K562 (cell line): ENCODE measurements at regions of chr18 and their contacts with region 1.

Region 1: DNA sequence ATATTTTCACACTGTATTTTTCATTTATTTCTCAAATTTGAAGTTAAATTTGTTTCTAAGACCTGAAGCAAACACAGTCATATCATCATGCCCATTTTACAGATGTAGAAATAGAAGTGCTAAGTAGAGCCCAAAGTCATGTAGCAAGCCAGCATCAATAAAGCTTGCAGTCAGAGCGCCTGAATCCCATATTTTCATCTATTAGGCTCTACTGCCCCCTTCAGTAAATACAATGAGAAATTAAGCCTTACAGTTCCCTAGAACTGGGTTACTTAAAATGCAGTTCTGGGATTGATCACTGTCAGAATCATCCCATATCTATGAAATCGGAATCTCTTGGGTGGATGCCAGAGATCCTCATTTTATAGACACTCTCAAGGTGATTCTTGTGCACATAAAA is 419.9 kb downstream of the TGIF1 start:
- DNase-seq: peak in 3 of 4 experiments; percentile 14 to 61 (median 49)
- ATAC-seq: peak; percentile 93
- H3K4me3 ChIP-seq: no peak overlapping the region
- H3K27ac ChIP-seq: no peak overlapping the region
- H3K4me1 ChIP-seq: no peaks in the 10 kb centered on the region
- H3K27me3 ChIP-seq: no peaks in the 10 kb centered on the region
- CTCF ChIP-seq: peak; percentile 32 to 76 (median 57); a peak in 5 of 6 replicates
- EP300 ChIP-seq: no peak
- POLR2A ChIP-seq: no peak
- RAD21 ChIP-seq: peak; percentile 79 to 89

Region 2: DNA sequence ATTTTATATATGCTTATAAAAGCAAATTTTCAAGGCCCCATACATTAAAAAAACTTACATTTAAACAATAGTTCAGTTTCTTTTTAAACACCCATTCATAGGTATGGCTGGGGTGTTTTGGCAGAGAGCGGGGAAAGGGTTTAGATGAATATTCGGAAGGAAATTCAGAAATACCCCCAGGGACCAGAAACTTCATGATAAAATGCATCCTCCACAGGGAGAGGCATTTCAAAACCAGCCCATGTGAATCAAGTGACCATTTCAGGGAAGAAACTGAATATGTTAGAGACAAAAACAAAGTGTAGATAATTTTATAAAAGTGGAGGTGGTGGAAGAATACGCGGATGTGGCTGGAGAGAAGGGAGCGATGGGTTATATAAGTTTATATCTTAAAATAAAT is 92.7 kb before region 1 on chr18:
- CTCF ChIA-PET with region 1: no interaction called
- POLR2A ChIA-PET with region 1: no interaction called
- in situ Hi-C with region 1: no loop called
- intact Hi-C with region 1: no loop called
- DNase-seq: no peak
- ATAC-seq: no peak
- H3K4me3 ChIP-seq: no peak overlapping the region
- H3K27ac ChIP-seq: no peak overlapping the region
- H3K4me1 ChIP-seq: no peaks in the 10 kb centered on the region
- H3K27me3 ChIP-seq: peaks cover 33 to 44% of the 10 kb centered on the region in 2 experiments
- CTCF ChIP-seq: no peak
- EP300 ChIP-seq: no peak
- POLR2A ChIP-seq: no peak
- RAD21 ChIP-seq: no peak

Region 3: GRCh38 chr18:3995476-3996102 is 125.7 kb after region 1 on chr18:
- CTCF ChIA-PET with region 1: no interaction called
- POLR2A ChIA-PET with region 1: no interaction called
- in situ Hi-C with region 1: no loop called
- intact Hi-C with region 1: loop called (anchors 5 kb)
- DNase-seq: peak; percentile 38 to 84 (median 48)
- ATAC-seq: peak; percentile 84
- H3K4me3 ChIP-seq: no peak overlapping the region
- H3K27ac ChIP-seq: no peak overlapping the region
- H3K4me1 ChIP-seq: no peaks in the 10 kb centered on the region
- H3K27me3 ChIP-seq: peaks cover 0 to 5% of the 10 kb centered on the region in 2 experiments; a peak in 1 of 5 replicates
- CTCF ChIP-seq: peak; percentile 76 to 90 (median 80)
- EP300 ChIP-seq: no peak
- POLR2A ChIP-seq: no peak
- RAD21 ChIP-seq: peak; percentile 52 to 66; a peak in 3 of 4 replicates